Right cardiac atrium (tissue), 5 donors: ENCODE measurements at regions of chr19 and their contacts with region 1.

Region 1: GRCh38 chr19:34327851-34328250 is 37.1 kb upstream of the GPI start:
- DNase-seq: peak; percentile 57 to 80 (median 74)
- ATAC-seq: peak; percentile 79 to 93
- H3K4me3 ChIP-seq: no peak overlapping the region
- H3K27ac ChIP-seq: no peak overlapping the region
- H3K4me1 ChIP-seq: peaks cover 2% of the 10 kb centered on the region
- H3K27me3 ChIP-seq: no peaks in the 10 kb centered on the region

Region 2: DNA sequence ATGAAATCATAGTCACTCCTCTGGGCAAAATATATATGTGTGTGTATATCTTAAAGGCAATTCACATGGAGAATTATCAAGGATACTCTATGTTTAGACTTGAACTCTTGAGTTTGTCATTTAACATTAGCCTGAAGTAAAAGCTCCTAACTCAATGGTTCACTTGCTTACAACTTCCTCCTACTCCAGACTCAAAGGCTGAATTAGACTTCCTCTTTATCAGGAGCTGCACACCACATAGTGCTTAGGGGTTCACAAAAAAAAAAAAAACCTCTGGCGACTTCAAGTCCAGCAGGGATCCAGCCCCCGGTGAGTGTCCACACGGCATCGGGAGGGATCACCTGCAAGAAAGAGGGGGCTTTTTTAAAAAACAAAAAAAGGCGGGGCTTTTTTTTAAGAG is 223.8 kb before region 1 on chr19:
- intact Hi-C with region 1: no loop called
- DNase-seq: no peak
- ATAC-seq: no peak
- H3K4me3 ChIP-seq: no peak overlapping the region
- H3K27ac ChIP-seq: no peak overlapping the region
- H3K4me1 ChIP-seq: no peaks in the 10 kb centered on the region
- H3K27me3 ChIP-seq: no peaks in the 10 kb centered on the region

Region 3: DNA sequence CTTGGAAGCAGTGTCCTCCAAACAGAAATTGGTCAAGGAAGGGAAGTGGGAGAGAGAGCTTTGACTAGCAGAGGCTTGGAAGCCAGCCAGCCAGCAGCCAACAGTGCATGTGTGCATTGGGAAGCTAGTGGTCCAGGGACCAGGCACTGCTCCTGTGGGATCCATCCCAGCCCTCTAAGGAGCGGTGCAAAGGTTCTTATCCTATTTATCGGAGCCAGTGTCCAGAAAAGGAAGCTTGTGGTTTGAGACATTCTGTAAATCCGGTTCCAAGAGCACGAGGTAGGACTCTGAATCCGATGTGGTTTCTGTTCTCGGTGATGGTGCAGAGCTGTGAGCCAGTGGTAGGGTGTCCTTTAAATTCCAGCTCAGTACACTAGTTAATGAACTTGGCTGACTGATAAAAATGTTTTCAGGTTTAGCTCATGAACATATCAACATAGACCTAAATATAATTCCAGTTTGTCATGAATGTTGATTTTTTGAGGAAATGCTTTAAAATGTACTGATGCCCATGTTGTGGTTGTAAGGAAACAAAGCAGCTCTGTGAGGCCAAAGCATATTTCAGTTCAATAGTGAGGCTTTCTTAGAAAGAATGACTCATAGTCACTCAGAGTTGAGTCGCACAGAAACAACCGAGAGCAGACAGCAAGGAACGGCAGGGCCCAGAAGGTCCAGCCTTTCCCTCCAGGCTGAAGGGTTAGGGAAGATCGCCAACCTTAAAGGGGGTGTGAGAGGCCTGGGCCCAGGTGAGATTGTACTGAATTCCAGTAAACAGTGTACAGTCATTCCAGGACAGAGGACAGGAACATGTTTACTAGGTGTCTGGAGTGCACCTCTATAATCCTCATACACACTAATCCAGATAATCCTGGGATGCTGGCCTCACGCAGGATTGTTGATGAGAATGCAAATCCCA is 95.0 kb before region 1 on chr19:
- intact Hi-C with region 1: no loop called
- DNase-seq: peak; percentile 64 to 86 (median 65)
- ATAC-seq: peak; percentile 71 to 73
- H3K4me3 ChIP-seq: no peak overlapping the region
- H3K27ac ChIP-seq: peak overlapping the region; percentile 80
- H3K4me1 ChIP-seq: peaks cover 6% of the 10 kb centered on the region
- H3K27me3 ChIP-seq: no peaks in the 10 kb centered on the region

Region 4: DNA sequence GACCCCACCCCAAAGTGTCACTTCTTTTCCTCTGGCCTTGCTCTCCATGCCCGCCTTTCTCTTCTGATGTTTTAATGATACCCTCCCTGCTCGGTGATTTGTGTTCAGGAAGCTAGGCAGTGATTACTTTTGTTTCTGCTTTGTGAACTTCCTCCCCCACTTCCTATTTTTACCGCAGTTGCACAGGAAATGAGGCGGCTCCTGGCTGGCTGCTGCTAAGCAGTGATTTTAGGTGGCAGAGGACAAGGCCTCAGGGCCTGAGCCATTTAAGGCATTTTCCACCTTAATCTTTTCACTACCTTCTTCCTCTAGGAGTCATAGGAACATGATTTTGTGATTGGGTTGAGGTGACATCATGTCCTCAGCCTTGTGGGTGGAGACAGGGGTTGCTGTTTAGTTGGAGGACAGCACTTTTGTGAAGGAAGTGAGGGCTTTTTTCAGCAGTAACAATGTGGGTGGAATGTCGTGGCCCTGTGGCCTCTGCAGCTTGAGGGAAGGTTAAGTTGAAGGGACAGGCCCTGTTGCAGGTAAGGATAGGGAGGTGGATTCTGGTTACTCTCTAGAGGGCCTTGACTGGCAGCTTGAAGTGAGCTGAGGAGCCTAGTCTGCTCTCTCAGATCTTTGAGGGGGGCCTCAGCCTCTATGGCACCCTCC is 57.8 kb before region 1 on chr19:
- intact Hi-C with region 1: loop called in 1 of 4 experiments (anchors 5 kb)
- DNase-seq: peak; percentile 70 to 86 (median 85)
- ATAC-seq: peak; percentile 88 to 93
- H3K4me3 ChIP-seq: peak overlapping the region; percentile 31
- H3K27ac ChIP-seq: peak overlapping the region; percentile 100
- H3K4me1 ChIP-seq: peaks cover 23% of the 10 kb centered on the region
- H3K27me3 ChIP-seq: no peaks in the 10 kb centered on the region

Region 5: DNA sequence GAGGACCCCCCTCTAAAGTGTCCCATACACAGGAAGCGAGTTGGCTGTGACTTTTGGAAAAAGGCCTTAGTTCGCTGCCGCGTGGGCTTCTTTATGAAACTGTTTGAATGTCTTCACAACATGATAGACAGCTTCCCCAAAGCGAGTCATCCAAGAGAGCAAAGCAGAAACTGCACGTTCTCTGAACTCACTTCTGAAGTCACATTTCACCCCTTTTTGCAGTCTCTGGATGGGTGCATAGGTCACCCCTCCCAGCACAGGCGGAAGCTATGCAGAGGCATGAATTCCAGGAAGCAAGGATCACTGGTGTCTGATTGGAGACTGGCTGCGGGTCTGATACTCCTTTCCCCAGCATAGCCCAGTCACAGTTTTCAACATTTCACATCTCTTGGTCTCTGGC is 47.7 kb after region 1 on chr19:
- intact Hi-C with region 1: no loop called
- DNase-seq: peak in 1 of 3 donors; percentile 8
- ATAC-seq: peak in 1 of 2 donors; percentile 67
- H3K4me3 ChIP-seq: no peak overlapping the region
- H3K27ac ChIP-seq: no peak overlapping the region
- H3K4me1 ChIP-seq: peaks cover 2% of the 10 kb centered on the region
- H3K27me3 ChIP-seq: no peaks in the 10 kb centered on the region